Mammary epithelial cell (primary cell): ENCODE measurements at regions of chr2 and their contacts with region 1.

Region 1: DNA sequence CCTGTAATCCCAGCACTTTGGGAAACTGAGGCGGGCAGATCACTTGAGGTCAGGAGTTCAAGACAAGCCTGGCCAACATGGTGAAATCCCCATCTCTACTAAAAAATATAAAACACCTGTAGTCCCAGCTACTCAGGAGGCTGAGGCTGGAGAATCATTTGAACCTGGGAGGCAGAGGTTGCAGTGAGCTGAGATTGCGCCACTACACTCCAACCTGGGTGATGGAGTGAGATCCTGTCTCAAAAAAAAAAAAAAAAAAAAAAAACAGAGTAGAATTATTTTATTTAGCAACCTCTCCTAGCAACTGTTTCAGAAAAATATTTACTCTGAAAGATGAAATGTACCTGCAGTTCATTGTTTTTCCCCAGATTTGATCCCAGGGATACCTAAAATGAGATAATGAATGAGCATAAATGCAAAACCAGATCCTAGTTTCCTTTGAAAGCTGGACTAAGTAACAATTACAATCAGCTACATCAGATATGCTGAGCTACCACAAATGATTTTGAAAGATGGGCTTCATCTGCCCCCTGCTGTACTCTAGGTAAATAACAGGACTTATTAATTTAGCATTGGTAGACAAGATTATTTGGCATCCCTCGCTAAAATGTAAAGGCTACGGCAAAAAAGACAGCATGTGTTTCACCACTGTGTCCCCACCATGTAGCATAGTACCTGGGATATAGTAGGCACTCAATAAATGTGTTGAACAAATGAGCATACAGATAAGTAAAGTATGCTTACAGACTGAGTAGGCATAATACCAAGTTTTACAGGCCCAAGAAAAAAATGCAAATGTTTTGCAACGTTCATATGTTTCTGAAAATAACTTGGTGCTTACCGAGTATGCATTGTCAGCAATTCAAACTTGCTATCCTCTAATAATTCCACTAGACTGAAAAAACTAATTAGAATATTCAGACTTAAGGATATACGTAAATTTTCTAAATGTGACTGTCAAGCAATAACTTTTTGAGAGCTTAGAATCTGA is 102.5 kb downstream of the ATL2 start:
- DNase-seq: peak; percentile 58
- H3K4me3 ChIP-seq: no peak overlapping the region
- H3K27ac ChIP-seq: no peak overlapping the region
- H3K4me1 ChIP-seq: no peaks in the 10 kb centered on the region
- H3K27me3 ChIP-seq: no peaks in the 10 kb centered on the region
- CTCF ChIP-seq: peak; percentile 56 to 65

Region 2: DNA sequence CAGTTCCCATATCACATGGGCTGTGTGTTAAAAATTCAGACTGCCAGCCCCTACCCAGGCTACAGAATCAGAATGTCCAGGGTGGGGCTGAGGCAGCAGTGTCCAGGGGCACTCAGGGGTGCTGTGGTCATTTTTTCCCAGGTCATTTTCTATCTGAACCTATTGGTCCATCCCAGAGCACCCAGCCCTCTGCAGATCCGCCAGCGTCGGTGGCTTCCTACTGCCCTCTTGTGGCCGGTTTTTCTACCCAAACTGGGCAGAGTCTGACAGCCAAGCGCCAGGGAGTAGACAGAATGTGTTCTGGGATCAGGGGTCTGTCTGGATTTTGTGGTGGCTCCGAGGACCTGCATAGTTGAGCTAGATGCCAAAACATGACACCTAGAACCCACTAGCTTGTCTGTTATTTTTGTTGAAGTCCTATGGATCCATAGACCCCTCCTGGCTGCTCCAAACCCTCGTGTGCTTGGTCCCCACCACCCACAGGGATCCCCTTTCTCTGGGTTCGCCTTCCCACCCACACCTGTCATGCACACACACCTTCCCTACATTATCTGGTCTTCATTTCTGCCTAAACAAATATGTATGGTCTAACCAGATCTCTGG is 383.6 kb before region 1 on chr2:
- CTCF ChIA-PET with region 1: interaction called, 21 read pairs
- dilution Hi-C with region 1: no loop called
- in situ Hi-C with region 1: no loop called
- intact Hi-C with region 1: loop called (anchors 1 kb)
- DNase-seq: peak; percentile 40
- H3K4me3 ChIP-seq: no peak overlapping the region
- H3K27ac ChIP-seq: no peak overlapping the region
- H3K4me1 ChIP-seq: peaks cover 16% of the 10 kb centered on the region
- H3K27me3 ChIP-seq: no peaks in the 10 kb centered on the region
- CTCF ChIP-seq: peak; percentile 67 to 82

Region 3: DNA sequence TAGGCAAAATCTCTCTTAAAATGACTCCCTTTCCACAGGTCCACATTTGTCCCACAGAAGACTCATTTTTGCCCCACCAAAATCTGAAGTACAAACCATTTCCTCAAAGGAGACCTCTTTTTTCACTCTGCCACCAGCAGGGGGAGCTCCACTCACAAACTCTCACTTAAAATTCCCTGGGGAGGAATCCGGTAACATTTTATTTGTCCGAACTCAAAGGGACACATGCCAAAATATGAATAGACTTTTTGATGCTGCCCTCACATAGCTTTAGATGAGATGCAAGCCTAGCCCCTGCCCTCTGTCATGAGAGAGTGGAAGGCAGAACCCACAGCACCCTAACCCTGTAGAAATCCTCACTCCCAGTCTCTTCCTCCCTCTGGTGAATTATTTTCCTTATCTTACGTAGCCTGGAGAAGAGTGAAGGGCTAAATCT is 292.4 kb before region 1 on chr2:
- CTCF ChIA-PET with region 1: interaction called, 5 read pairs
- dilution Hi-C with region 1: no loop called
- in situ Hi-C with region 1: loop called (anchors 5 kb)
- intact Hi-C with region 1: loop called (anchors 1 kb)
- DNase-seq: peak; percentile 52
- H3K4me3 ChIP-seq: no peak overlapping the region
- H3K27ac ChIP-seq: no peak overlapping the region
- H3K4me1 ChIP-seq: peaks cover 11% of the 10 kb centered on the region
- H3K27me3 ChIP-seq: no peaks in the 10 kb centered on the region
- CTCF ChIP-seq: peak; percentile 77 to 80

Region 4: DNA sequence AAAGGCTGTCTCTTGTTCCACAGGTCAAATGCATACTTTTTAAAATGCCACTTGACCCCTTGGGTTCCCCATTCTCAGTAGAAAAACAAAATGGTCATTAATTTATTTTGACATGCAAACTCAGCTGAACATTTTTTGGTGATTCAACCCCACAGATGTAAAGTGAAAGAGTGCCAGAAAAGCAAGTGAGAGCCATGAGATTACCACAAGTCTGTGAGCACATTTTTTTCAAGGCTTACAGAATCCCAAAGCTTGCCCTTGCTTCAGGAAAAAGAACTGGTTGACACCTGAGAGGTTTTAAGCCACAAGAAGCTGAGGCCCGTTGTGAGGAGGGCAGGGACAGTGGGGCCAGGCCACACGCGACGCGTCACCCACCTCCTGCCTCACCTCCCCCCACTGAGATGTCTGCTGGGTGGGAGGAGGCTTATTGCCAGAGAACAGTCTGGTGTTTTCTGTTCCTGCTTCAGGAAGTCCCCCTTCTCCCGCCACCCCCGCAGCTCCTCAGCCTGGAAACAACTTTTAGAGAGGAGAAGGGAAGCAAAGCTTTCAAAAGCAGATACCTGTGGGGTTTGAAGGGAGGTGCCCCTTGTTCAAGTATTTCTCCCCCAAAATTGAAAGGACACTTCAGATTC is 128.2 kb before region 1 on chr2:
- CTCF ChIA-PET with region 1: no interaction called
- dilution Hi-C with region 1: no loop called
- in situ Hi-C with region 1: no loop called
- intact Hi-C with region 1: loop called (anchors 10 kb)
- DNase-seq: peak; percentile 90
- H3K4me3 ChIP-seq: peak overlapping the region in 1 of 3 experiments; percentile 30
- H3K27ac ChIP-seq: peak overlapping the region; percentile 98
- H3K4me1 ChIP-seq: peaks cover 40% of the 10 kb centered on the region
- H3K27me3 ChIP-seq: no peaks in the 10 kb centered on the region
- CTCF ChIP-seq: no peak

Region 5: DNA sequence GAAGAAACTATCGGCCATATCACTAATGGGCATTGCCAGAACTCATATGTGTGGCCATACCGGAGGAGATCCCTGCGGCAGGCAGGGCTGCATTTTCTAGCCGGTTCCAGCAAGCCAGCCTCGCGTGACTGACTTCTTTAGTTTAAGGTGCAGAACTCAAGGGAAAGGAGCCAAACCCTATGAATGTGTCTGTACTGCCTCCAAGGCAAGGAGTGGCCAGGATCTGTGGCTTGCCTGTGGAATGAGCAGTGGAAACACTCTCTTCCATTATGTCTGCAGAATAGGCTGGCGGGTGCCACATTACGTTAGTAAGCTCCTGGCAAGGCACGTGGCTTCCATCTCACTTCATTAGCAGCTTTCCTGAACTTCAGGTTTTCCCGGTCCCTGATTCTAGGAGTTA is 35.1 kb before region 1 on chr2:
- CTCF ChIA-PET with region 1: no interaction called
- dilution Hi-C with region 1: no loop called
- in situ Hi-C with region 1: no loop called
- intact Hi-C with region 1: loop called (anchors 1 kb)
- DNase-seq: peak; percentile 78
- H3K4me3 ChIP-seq: no peak overlapping the region
- H3K27ac ChIP-seq: peak overlapping the region; percentile 15
- H3K4me1 ChIP-seq: peaks cover 10% of the 10 kb centered on the region
- H3K27me3 ChIP-seq: no peaks in the 10 kb centered on the region
- CTCF ChIP-seq: no peak